ENCODE measurements at regions of chr5 and their contacts with region 1.

Region 1: DNA sequence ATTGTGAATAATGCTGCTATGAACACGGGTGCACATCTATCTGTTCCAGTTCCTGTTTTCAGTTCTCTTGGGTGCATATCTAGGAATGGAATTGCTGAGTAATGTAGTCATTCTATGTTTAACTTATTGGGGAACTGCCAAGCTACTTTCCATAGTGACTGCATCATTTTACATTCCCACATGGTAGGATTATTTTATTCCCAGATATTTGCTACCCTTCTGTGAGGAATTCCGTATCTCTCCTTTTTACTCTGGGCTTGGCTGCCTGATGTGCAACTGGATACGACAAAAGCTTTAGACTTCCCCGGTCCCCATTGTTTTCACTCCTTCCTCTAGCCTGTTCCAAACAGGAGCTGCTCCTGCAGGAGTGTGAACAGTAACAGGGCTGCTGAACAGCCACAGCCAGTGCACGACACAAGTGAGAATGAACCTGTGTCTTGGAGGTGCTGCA is 7.2 kb downstream of the TAS2R1 start:
- DNase-seq: peak; percentile 73
- H3K4me3 ChIP-seq: no peak overlapping the region
- H3K27ac ChIP-seq: peak overlapping the region; percentile 78
- H3K27me3 ChIP-seq: no peaks in the 10 kb centered on the region
- CTCF ChIP-seq: no peak

Region 2: GRCh38 chr5:10513501-10514442 is 890.8 kb after region 1 on chr5:
- CTCF ChIA-PET with region 1: no interaction called
- POLR2A ChIA-PET with region 1: interaction called, 17 read pairs
- DNase-seq: peak; percentile 57
- H3K4me3 ChIP-seq: no peak overlapping the region
- H3K27ac ChIP-seq: peak overlapping the region; percentile 73
- H3K27me3 ChIP-seq: no peaks in the 10 kb centered on the region
- CTCF ChIP-seq: no peak

Measured in AG04450 (cell line).